ENCODE measurements at regions of chr5 and their contacts with region 1.

Region 1: GRCh38 chr5:139787568-139788293 is 7.9 kb upstream of the PSD2 start:
- DNase-seq: peak; percentile 80 to 92 (median 89)
- ATAC-seq: peak; percentile 94
- H3K4me3 ChIP-seq: no peak overlapping the region
- H3K4me1 ChIP-seq: peaks cover 7% of the 10 kb centered on the region
- CTCF ChIP-seq: peak; percentile 99

Region 2: GRCh38 chr5:139863855-139864558 is 76.3 kb after region 1 on chr5:
- intact Hi-C with region 1: loop called (anchors 5 to 10 kb)
- DNase-seq: peak in 2 of 3 donors; percentile 66 to 82
- ATAC-seq: peak; percentile 70
- H3K4me3 ChIP-seq: no peak overlapping the region
- H3K4me1 ChIP-seq: no peaks in the 10 kb centered on the region
- CTCF ChIP-seq: peak; percentile 88

Region 3: GRCh38 chr5:139968547-139969261 is 181.0 kb after region 1 on chr5:
- intact Hi-C with region 1: loop called (anchors 5 kb)
- DNase-seq: peak; percentile 82 to 94 (median 93)
- ATAC-seq: peak; percentile 100
- H3K4me3 ChIP-seq: no peak overlapping the region
- H3K4me1 ChIP-seq: no peaks in the 10 kb centered on the region
- CTCF ChIP-seq: peak; percentile 98

Region 4: DNA sequence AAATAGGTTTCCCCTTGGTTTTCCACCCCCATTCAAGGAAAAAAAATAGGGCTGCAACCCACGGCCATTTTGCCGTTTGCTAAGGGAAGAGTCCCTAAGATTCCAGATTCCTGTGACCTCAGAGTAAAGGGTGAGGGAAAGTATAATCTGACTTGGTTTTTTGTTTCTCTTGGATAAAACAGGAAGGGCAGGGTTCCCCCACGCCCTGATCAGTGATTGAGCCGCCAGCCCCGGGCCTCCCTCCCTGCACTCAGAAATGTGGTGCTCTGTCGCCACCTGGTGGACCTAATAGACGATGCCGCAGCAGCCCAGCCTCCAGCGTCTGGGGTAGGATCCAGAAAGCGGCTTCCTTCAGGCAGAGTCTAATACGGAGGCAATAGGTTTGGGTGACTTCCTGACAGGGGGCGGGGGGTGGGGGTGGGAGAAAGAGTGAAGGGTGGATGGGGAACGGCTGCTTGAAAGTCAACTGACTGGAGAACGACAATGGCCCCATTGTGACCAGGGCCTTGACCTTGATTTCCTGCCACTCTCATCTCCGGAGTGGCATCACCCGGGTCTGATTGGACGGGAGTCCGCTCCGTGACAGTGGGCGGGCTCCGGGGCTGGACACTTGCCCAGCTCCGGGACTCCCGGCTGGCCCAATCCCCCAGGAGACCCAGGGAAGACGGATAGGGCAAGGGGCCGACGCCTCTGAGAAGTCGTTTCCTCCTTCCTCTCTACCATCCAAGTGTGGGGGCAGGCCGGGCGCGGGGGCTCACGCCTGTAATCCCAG is 369.5 kb after region 1 on chr5:
- intact Hi-C with region 1: loop called in 1 of 2 experiments (anchors 10 kb)
- DNase-seq: peak; percentile 88 to 95 (median 93)
- ATAC-seq: peak; percentile 99
- H3K4me3 ChIP-seq: no peak overlapping the region
- H3K4me1 ChIP-seq: peaks cover 3% of the 10 kb centered on the region
- CTCF ChIP-seq: peak; percentile 66

Measured in mucosa of descending colon (tissue), 3 donors.